ENCODE measurements at regions of chr1 and their contacts with region 1.

Region 1: GRCh38 chr1:18100491-18101063 is 7.0 kb upstream of the IGSF21 start:
- DNase-seq: no peak
- H3K4me3 ChIP-seq: no peak overlapping the region
- CTCF ChIP-seq: peak; percentile 74

Region 2: GRCh38 chr1:17922833-17923232 is 177.7 kb before region 1 on chr1:
- CTCF ChIA-PET with region 1: interaction called, 12 read pairs
- POLR2A ChIA-PET with region 1: interaction called, 3 read pairs
- DNase-seq: no peak
- H3K4me3 ChIP-seq: no peak overlapping the region
- CTCF ChIP-seq: peak; percentile 41